ENCODE measurements at regions of chr7 and their contacts with region 1.

Region 1: DNA sequence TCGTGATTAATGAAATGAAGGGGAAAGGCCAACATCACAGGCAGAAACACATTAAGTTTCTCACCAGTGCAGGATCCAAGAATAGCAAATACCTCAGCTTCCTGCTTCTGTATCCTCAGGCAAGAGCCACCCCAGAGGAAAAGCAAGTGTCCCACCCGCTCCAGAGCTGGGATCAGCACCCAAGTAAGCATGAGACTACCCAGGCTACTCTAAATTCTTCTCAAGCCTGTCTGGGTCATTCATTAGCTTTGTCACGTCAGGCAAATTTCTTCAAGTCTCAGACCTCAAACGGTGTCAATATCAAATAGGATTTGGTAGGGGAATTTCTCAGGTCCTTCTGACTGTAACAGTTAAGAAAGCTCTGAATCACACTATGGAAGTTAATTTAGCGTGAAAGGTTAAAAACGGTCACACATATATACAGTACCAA is 59.0 kb downstream of the GNA12 start:
- DNase-seq: peak; percentile 59 to 99
- H3K4me3 ChIP-seq: no peak overlapping the region; the same call in 1 of the 2 replicates
- H3K27ac ChIP-seq: peak overlapping the region; percentile 94
- H3K4me1 ChIP-seq: peaks cover 45% of the 10 kb centered on the region
- H3K27me3 ChIP-seq: no peaks in the 10 kb centered on the region
- CTCF ChIP-seq: no peak

Region 2: DNA sequence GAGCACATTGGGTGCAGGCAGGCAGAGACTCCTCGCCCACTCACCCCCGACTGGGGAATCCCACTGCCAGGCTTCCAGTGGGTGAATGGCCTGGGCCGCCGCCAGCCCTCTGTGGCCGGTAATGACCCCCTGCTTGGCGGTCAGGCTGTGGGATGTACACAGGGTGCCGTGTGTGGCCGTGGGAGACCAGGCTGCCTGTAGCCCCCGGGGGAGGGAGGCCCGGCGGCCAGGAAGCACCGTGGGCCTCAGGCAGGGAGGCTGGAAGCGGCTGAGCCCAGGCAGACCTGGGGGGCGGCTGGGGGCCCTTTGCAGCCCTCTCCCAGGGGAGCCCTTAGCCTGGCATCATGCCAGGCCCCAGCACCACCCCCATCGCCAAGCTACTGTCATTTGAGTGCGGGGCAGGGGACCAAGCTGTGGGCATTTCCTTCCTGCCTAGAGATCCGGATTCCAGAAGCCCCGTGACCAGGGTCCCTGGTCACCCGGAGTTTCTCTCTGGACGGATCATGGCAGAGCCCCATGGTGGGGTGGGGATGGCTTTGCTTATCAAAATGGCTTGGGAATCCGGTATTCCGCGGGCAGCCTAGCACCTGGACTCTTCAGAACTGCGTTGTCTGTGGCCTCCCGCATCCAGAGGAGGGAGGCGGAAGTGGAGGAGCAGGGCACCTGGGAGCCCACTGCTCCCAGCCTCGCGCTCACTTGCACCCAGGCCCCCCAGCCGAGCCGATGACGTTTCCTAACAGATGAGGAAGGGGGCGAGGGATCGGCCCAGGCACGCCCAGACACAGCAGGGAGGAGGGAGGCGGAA is 152.2 kb before region 1 on chr7:
- CTCF ChIA-PET with region 1: no interaction called
- POLR2A ChIA-PET with region 1: interaction called, 46 read pairs
- intact Hi-C with region 1: no loop called
- DNase-seq: peak in 1 of 2 experiments; percentile 56
- H3K4me3 ChIP-seq: peak overlapping the region; percentile 87
- H3K27ac ChIP-seq: peak overlapping the region; percentile 45
- H3K4me1 ChIP-seq: peaks cover 22% of the 10 kb centered on the region
- H3K27me3 ChIP-seq: no peaks in the 10 kb centered on the region
- CTCF ChIP-seq: no peak

Region 3: DNA sequence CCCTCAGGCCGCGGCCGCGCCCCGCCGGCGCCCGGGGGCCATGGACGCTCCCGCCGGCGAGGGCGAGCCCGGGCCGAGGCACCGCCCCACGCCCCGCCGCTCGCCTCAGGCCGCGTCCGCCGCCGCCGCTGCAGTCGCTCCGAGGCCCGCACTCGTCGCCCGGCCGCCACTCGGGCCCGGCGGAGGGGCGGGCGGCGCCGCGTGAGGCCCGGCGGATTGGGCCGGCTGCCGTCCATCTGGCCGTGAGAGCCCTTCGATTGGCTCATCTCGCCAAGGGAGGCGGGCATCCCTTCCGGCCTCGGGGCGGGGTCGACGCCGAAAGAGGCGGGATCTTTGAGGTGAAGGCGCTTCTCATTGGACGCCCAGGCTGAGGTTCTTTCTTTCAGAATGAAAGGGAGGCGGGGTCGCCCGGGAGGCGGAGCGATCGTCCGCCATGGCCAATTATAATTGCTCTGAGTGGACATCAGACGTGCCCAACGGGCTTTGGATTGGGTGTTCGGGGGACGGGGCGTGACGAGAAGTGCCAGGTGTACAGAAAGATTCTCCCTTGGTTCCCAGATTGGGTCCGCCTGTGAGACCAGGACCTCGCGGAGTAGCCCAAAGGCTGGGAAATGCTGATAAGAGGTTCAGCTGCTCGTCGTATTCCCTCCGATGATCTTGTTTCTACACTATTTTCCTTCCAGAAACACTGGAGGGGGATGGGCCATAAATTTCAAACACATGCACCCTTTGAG is 59.2 kb after region 1 on chr7 and contains the start of gene GNA12:
- CTCF ChIA-PET with region 1: no interaction called
- POLR2A ChIA-PET with region 1: no interaction called
- intact Hi-C with region 1: loop called (anchors 5 kb)
- DNase-seq: peak; percentile 97 to 100
- H3K4me3 ChIP-seq: peak within 1 kb of the TSS; percentile 73
- H3K27ac ChIP-seq: peak within 1 kb of the TSS; percentile 46; the same call in 1 of the 2 replicates
- H3K4me1 ChIP-seq: peaks cover 31% of the 10 kb centered on the region
- H3K27me3 ChIP-seq: no peaks in the 10 kb centered on the region
- CTCF ChIP-seq: no peak
- total RNA-seq, gene GNA12: 50.8 and 51.7 TPM in 2 replicates

Region 4: DNA sequence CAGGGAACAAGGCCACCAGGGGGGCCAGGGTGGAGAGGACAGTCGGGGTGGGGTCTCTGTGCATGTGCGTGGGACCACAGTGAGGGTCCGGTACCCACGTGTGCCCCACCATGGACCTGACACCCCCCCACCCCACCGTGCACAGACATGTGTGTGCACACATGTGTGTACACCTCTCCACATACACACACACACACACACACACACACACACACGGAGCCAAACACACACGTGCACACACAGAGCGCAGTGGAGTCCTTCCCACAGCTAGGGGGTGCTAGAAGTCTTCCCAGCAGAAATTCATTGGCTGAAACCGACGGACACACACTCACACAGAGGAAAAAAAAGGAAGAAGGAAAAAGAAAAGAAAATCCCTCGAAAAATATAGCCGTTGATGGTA is 101.8 kb after region 1 on chr7:
- CTCF ChIA-PET with region 1: no interaction called
- POLR2A ChIA-PET with region 1: no interaction called
- intact Hi-C with region 1: no loop called
- DNase-seq: peak; percentile 55 to 61
- H3K4me3 ChIP-seq: no peak overlapping the region
- H3K27ac ChIP-seq: no peak overlapping the region
- H3K4me1 ChIP-seq: no peaks in the 10 kb centered on the region
- H3K27me3 ChIP-seq: no peaks in the 10 kb centered on the region
- CTCF ChIP-seq: peak; percentile 92

Measured in PC-9 (cell line).